Endothelial cell of umbilical vein (primary cell): ENCODE measurements at regions of chr19 and their contacts with region 1.

Region 1: DNA sequence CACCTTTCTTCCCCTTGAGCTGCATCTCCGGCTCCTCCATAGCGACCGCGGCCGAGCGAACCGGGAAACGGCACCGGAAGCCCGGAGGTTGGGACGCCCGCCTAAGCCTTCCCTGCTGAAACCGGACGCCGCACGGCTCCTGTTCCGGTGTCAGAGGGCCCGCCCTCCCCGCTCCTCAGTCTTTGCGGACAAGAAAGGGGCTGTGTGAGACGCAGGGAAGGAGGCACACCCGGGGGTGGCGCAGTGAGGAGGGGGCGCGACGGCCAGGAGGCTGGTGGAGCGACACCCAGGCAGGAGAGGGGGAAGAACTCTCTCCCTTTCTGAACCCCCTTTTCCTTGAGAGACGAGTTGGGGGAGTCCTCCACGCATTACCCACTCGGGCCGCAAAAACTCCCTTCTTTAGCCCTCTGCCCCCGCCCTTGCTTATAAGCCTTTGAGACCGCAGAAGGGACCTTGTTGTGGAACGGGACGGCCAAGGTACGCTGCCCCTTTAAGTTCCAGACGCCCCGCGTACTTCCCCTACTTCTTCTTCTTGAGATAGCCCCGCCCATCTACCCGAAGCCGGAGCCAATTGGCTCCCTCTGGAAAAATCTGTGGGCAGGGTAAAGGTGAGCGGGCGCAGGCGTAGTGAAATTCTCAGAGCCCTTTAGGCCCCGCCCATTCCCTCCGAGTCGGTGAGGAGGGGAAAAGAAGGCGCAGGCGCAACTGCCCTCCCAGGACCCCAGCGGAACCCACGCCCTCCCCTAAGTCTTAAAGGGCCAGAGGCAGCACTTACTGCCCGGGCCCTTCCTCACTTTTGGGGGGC is at the starts of genes BORCS8 and RFXANK:
- DNase-seq: peak; percentile 100
- H3K4me3 ChIP-seq: peak within 1 kb of the TSS; percentile 78 to 100 (median 98)
- H3K27ac ChIP-seq: peak within 1 kb of the TSS; percentile 98
- H3K4me1 ChIP-seq: peaks cover 15% of the 10 kb centered on the region
- H3K27me3 ChIP-seq: no peaks in the 10 kb centered on the region
- CTCF ChIP-seq: no peak
- POLR2A ChIP-seq: peak; percentile 52
- total RNA-seq, gene BORCS8: 35.6 and 45.8 TPM in 2 replicates
- total RNA-seq, gene RFXANK: 105 and 118 TPM in 2 replicates

Region 2: DNA sequence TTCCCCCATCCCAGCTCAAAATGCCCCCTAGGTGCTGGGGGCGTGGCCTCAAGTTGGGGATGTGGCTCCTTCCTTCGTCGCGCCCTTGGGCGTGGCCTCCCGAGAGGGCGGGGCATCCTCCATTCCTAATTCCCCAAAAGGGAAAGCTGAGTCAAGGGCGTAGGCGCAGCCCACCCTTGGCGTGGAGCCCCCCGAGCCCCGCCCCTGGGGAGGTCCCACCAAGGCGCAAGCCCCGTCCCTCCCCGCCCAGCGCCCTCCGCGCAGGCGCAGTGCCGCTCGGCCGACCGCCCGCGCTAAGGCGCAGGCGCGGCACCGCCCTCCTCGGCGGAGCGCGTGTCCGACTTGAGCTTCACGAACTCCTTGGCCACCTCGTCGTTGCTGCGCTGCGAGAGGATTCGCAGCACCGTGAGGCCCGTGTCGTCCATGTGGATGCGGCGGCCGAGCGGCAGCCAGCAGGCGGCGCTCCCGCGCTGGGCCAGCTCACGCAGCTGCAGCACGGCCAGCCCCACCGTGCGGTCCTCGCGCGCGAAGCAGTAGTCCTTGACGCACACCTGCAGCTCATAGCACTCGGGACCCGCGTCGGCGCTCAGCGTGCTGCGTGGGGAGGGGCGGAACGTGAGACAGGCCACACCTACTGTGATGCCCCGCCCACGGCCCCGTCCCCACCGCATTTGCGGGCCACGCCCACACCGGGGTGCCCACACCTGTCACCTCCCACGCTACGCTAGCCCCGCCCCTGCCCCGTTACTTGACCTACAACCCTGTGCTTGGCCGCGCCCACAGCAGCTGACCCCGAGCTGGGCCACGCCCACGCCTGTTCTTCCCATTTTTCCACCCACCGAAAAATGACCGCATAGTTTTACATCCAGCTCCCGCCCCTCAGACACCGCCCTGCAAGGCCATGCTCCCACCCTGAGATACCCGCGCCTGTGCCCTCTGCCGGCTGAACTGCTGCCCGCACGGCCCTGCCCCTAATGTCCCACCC is 1586.2 kb before region 1 on chr19:
- CTCF ChIA-PET with region 1: no interaction called
- POLR2A ChIA-PET with region 1: no interaction called
- dilution Hi-C with region 1: no loop called
- intact Hi-C with region 1: no loop called
- DNase-seq: peak; percentile 77
- H3K4me3 ChIP-seq: peak overlapping the region in 1 of 3 experiments; percentile 0
- H3K27ac ChIP-seq: no peak overlapping the region
- H3K4me1 ChIP-seq: no peaks in the 10 kb centered on the region
- H3K27me3 ChIP-seq: peaks cover 2 to 3% of the 10 kb centered on the region in 2 experiments
- CTCF ChIP-seq: peak; percentile 70
- POLR2A ChIP-seq: no peak

Region 3: DNA sequence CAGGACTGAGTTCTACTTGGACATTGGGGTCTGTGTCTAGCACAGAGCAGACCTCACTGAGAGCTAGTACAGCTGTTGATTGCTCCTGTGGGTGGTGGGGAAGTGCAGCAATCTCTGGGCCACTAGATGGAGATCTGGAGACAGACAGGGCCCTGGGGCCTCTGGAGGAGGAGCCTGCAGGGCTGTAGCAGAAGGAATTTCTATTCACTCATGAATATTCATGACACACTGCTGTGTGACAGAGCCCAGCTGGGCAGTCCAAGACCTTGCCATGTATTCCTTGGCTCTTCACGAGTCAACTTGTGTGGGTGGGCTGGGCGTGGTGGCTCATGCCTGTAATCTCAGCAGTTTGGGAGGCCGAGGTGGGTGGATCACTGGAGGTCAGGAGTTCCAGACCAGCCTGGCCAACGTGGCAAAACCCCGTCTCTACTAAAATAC is 196.5 kb before region 1 on chr19:
- CTCF ChIA-PET with region 1: no interaction called
- POLR2A ChIA-PET with region 1: no interaction called
- dilution Hi-C with region 1: no loop called
- intact Hi-C with region 1: no loop called
- DNase-seq: peak; percentile 70
- H3K4me3 ChIP-seq: no peak overlapping the region
- H3K27ac ChIP-seq: no peak overlapping the region
- H3K4me1 ChIP-seq: peaks cover 13% of the 10 kb centered on the region
- H3K27me3 ChIP-seq: no peaks in the 10 kb centered on the region
- CTCF ChIP-seq: peak; percentile 47 to 76
- POLR2A ChIP-seq: no peak

Region 4: GRCh38 chr19:19203012-19203856 is 11.0 kb after region 1 on chr19 and contains the start of gene NR2C2AP:
- CTCF ChIA-PET with region 1: interaction called, 13 read pairs
- POLR2A ChIA-PET with region 1: interaction called, 6 read pairs
- dilution Hi-C with region 1: no loop called
- intact Hi-C with region 1: loop called (anchors 1 kb)
- DNase-seq: peak; percentile 91
- H3K4me3 ChIP-seq: peak within 1 kb of the TSS; percentile 33 to 59 (median 45)
- H3K27ac ChIP-seq: peak within 1 kb of the TSS; percentile 19
- H3K4me1 ChIP-seq: peaks cover 6% of the 10 kb centered on the region
- H3K27me3 ChIP-seq: no peaks in the 10 kb centered on the region
- CTCF ChIP-seq: no peak
- POLR2A ChIP-seq: peak; percentile 70
- total RNA-seq, gene NR2C2AP: 16.6 and 17.5 TPM in 2 replicates

Region 5: GRCh38 chr19:19320362-19321142 is 128.3 kb after region 1 on chr19 and contains the starts of genes MAU2 and SUGP1:
- CTCF ChIA-PET with region 1: no interaction called
- POLR2A ChIA-PET with region 1: no interaction called
- dilution Hi-C with region 1: no loop called
- intact Hi-C with region 1: loop called (anchors 2 kb)
- DNase-seq: peak; percentile 89
- H3K4me3 ChIP-seq: peak within 1 kb of the TSS; percentile 69 to 90 (median 83)
- H3K27ac ChIP-seq: peak within 1 kb of the TSS; percentile 94
- H3K4me1 ChIP-seq: peaks cover 13% of the 10 kb centered on the region
- H3K27me3 ChIP-seq: no peaks in the 10 kb centered on the region
- CTCF ChIP-seq: no peak
- POLR2A ChIP-seq: peak; percentile 78
- total RNA-seq, gene MAU2: 57.3 and 70.0 TPM in 2 replicates
- total RNA-seq, gene SUGP1: 59.9 and 64.7 TPM in 2 replicates